ENCODE measurements at regions of chr17 and their contacts with region 1.

Region 1: GRCh38 chr17:64420143-64420971 is 28.6 kb upstream of the MILR1 start:
- DNase-seq: peak; percentile 33
- H3K4me3 Mint-ChIP-seq: no peak overlapping the region
- H3K27ac Mint-ChIP-seq: no peak overlapping the region
- H3K4me1 Mint-ChIP-seq: peaks cover 12% of the 10 kb centered on the region
- H3K27me3 Mint-ChIP-seq: peaks cover 5% of the 10 kb centered on the region

Region 2: DNA sequence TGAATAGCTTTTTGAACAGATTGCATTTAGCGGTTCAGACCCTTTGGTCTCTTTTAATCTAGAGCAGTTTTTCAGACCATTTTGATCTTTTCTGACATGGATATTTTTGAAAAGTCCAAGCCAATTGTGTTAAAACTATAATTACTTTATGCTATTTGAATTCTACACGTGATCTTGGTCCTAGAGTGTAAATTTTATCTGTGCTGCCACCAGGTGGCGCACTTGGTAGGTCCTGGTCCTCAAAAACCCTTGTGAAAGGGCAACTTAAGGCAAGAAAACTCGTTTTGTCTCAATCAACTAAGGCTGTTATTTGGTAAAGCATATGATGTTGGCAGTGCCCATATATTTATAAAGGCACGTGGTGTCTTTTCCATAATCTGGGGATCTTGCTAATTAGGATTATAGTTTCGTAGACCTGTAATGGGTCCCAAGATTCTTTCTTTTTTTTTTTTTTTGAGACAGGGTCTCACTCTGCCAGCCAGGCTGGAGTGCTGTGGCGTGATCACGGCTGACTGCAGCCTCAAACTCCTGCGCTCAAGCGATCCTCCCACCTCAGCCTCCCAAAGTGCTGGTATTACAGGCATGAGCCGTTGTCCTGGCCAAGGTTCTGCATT is 113.4 kb before region 1 on chr17:
- intact Hi-C with region 1: loop called (anchors 1 kb)
- DNase-seq: peak; percentile 43
- H3K4me3 Mint-ChIP-seq: no peak overlapping the region
- H3K27ac Mint-ChIP-seq: no peak overlapping the region
- H3K4me1 Mint-ChIP-seq: peaks cover 5% of the 10 kb centered on the region
- H3K27me3 Mint-ChIP-seq: peaks cover 4% of the 10 kb centered on the region

Region 3: GRCh38 chr17:64320613-64321553 is 99.5 kb before region 1 on chr17:
- intact Hi-C with region 1: loop called (anchors 1 kb)
- DNase-seq: peak; percentile 26
- H3K4me3 Mint-ChIP-seq: no peak overlapping the region
- H3K27ac Mint-ChIP-seq: no peak overlapping the region
- H3K4me1 Mint-ChIP-seq: peaks cover 18% of the 10 kb centered on the region
- H3K27me3 Mint-ChIP-seq: peaks cover 25% of the 10 kb centered on the region

Region 4: GRCh38 chr17:64385187-64386083 is 34.9 kb before region 1 on chr17:
- intact Hi-C with region 1: no loop called
- DNase-seq: peak; percentile 12
- H3K4me3 Mint-ChIP-seq: peak overlapping the region; percentile 55
- H3K27ac Mint-ChIP-seq: peak overlapping the region; percentile 26
- H3K4me1 Mint-ChIP-seq: peaks cover 25% of the 10 kb centered on the region
- H3K27me3 Mint-ChIP-seq: peaks cover 8% of the 10 kb centered on the region

Region 5: GRCh38 chr17:64491034-64491859 is 70.9 kb after region 1 on chr17:
- intact Hi-C with region 1: loop called (anchors 1 kb)
- DNase-seq: peak; percentile 53
- H3K4me3 Mint-ChIP-seq: no peak overlapping the region
- H3K27ac Mint-ChIP-seq: no peak overlapping the region
- H3K4me1 Mint-ChIP-seq: peaks cover 30% of the 10 kb centered on the region
- H3K27me3 Mint-ChIP-seq: no peaks in the 10 kb centered on the region

Region 6: GRCh38 chr17:64599187-64599676 is 178.9 kb after region 1 on chr17:
- intact Hi-C with region 1: loop called (anchors 1 kb)
- DNase-seq: peak; percentile 56
- H3K4me3 Mint-ChIP-seq: peak overlapping the region; percentile 55
- H3K27ac Mint-ChIP-seq: peak overlapping the region; percentile 67
- H3K4me1 Mint-ChIP-seq: peaks cover 29% of the 10 kb centered on the region
- H3K27me3 Mint-ChIP-seq: no peaks in the 10 kb centered on the region

Region 7: GRCh38 chr17:64653325-64653984 is 233.1 kb after region 1 on chr17:
- intact Hi-C with region 1: loop called (anchors 1 kb)
- DNase-seq: no peak
- H3K4me3 Mint-ChIP-seq: no peak overlapping the region
- H3K27ac Mint-ChIP-seq: no peak overlapping the region
- H3K4me1 Mint-ChIP-seq: peaks cover 32% of the 10 kb centered on the region
- H3K27me3 Mint-ChIP-seq: no peaks in the 10 kb centered on the region

Region 8: GRCh38 chr17:64736804-64737492 is 316.6 kb after region 1 on chr17:
- intact Hi-C with region 1: loop called (anchors 1 kb)
- DNase-seq: peak; percentile 17
- H3K4me3 Mint-ChIP-seq: no peak overlapping the region
- H3K27ac Mint-ChIP-seq: no peak overlapping the region
- H3K4me1 Mint-ChIP-seq: peaks cover 23% of the 10 kb centered on the region
- H3K27me3 Mint-ChIP-seq: no peaks in the 10 kb centered on the region